ENCODE measurements at regions of chr17 and their contacts with region 1.

Region 1: GRCh38 chr17:1724506-1725362 is at the start of gene WDR81:
- DNase-seq: peak; percentile 58
- H3K4me3 ChIP-seq: peak within 1 kb of the TSS; percentile 64 to 94 (median 90)
- H3K27ac ChIP-seq: peak within 1 kb of the TSS; percentile 89 to 92 (median 91)
- H3K4me1 ChIP-seq: peaks cover 36 to 84% (median 48%) of the 10 kb centered on the region in 3 donors
- H3K27me3 ChIP-seq: no peaks in the 10 kb centered on the region
- CTCF ChIP-seq: no peak
- POLR2A ChIP-seq: peak in 1 of 4 donors; percentile 60
- total RNA-seq, gene WDR81: 12.5 to 33.8 (median 21.1) TPM

Region 2: DNA sequence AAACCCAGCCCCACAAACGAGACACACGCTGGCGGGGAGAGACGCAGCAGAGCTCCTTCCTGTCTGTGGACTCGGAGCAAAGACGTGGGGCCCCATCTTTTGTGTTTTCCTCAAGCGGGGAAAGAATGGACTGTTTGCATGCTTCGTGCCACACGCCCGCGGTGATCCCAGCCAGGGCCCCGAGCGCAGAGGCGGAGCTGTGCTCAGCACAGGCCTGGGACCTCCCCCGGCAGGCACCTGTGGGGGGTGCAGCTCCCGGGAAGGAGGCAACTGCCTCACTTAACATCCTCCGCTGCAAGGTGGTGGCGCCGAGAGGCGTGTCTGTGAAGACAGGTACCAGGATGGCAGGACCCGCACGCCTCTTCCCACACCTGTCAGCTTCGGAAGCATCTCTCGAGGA is 426.1 kb before region 1 on chr17:
- intact Hi-C with region 1: no loop called
- DNase-seq: no peak
- H3K4me3 ChIP-seq: peak overlapping the region in 1 of 4 donors; percentile 23
- H3K27ac ChIP-seq: no peak overlapping the region
- H3K4me1 ChIP-seq: peaks cover 0 to 9% (median 5%) of the 10 kb centered on the region in 3 donors
- H3K27me3 ChIP-seq: peaks cover 0 to 70% (median 5%) of the 10 kb centered on the region in 4 donors
- CTCF ChIP-seq: no peak
- POLR2A ChIP-seq: no peak

Region 3: DNA sequence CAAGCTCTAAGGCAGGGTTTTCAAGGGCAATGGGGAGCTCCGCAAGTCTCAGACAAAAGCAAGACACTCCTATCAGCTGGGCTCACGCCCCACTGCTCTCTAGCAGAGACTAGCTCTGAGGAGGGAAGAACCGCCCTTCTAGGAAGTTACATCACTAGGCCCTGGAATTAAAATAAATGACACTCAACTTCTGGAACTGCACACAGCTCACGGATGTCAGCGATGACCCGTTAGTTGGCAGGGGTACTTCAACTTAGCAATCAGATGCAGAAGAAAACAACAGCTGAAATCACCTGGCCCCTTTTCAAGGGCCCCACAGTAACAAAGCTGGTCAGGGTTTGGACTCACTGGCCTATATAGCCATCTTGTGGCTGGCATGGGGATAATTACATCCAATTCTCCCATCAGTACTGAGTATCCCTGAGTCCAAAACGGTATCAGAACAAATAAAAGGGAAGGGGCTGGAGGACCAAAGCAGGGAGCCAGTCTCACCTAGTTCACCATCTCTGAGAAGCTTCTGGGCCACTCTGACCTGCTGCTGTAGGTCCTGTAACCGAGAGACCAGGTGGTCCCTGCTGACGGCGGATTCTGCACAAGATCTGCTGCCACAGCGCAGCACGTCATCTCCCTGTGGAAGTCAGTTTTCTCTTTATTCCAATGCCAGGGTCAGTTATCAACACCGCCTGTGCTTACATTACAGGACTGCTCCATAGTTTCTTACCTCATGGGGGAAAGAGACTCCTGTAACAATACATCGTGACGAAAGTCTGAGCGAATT is 59.3 kb after region 1 on chr17:
- intact Hi-C with region 1: loop called (anchors 5 kb)
- DNase-seq: no peak
- H3K4me3 ChIP-seq: peak overlapping the region in 1 of 4 donors; percentile 3
- H3K27ac ChIP-seq: peak overlapping the region; percentile 73 to 98 (median 92)
- H3K4me1 ChIP-seq: peaks cover 21 to 81% (median 42%) of the 10 kb centered on the region in 3 donors
- H3K27me3 ChIP-seq: no peaks in the 10 kb centered on the region
- CTCF ChIP-seq: peak; percentile 50 to 84 (median 76)
- POLR2A ChIP-seq: peak in 2 of 4 donors; percentile 55 to 62

Region 4: GRCh38 chr17:1865252-1866037 is 140.7 kb after region 1 on chr17:
- intact Hi-C with region 1: loop called (anchors 10 kb)
- DNase-seq: no peak
- H3K4me3 ChIP-seq: no peak overlapping the region
- H3K27ac ChIP-seq: no peak overlapping the region
- H3K4me1 ChIP-seq: peaks cover 0 to 3% (median 0%) of the 10 kb centered on the region in 3 donors
- H3K27me3 ChIP-seq: no peaks in the 10 kb centered on the region
- CTCF ChIP-seq: peak; percentile 37 to 75 (median 66)
- POLR2A ChIP-seq: no peak